Calu3 (cell line): ENCODE measurements at regions of chr6 and their contacts with region 1.

Region 1: GRCh38 chr6:7725849-7726415 is at the start of gene BMP6:
- DNase-seq: peak; percentile 82
- H3K4me3 Mint-ChIP-seq: peak within 1 kb of the TSS; percentile 76
- H3K27ac Mint-ChIP-seq: no peak within 1 kb of the TSS
- H3K4me1 Mint-ChIP-seq: no peaks in the 10 kb centered on the region
- H3K27me3 Mint-ChIP-seq: peaks cover 54% of the 10 kb centered on the region
- CTCF ChIP-seq: no peak
- total RNA-seq, gene BMP6: 0.17 and 0.27 TPM in 2 replicates

Region 2: GRCh38 chr6:7528565-7528964 is 197.4 kb before region 1 on chr6:
- CTCF ChIA-PET with region 1: no interaction called
- intact Hi-C with region 1: no loop called
- DNase-seq: no peak
- H3K4me3 Mint-ChIP-seq: no peak overlapping the region
- H3K27ac Mint-ChIP-seq: no peak overlapping the region
- H3K4me1 Mint-ChIP-seq: no peaks in the 10 kb centered on the region
- H3K27me3 Mint-ChIP-seq: no peaks in the 10 kb centered on the region
- CTCF ChIP-seq: no peak

Region 3: GRCh38 chr6:7803219-7803618 is 77.3 kb after region 1 on chr6:
- CTCF ChIA-PET with region 1: no interaction called
- intact Hi-C with region 1: no loop called
- DNase-seq: no peak
- H3K4me3 Mint-ChIP-seq: no peak overlapping the region
- H3K27ac Mint-ChIP-seq: no peak overlapping the region
- H3K4me1 Mint-ChIP-seq: no peaks in the 10 kb centered on the region
- H3K27me3 Mint-ChIP-seq: peaks cover 38% of the 10 kb centered on the region
- CTCF ChIP-seq: no peak

Region 4: DNA sequence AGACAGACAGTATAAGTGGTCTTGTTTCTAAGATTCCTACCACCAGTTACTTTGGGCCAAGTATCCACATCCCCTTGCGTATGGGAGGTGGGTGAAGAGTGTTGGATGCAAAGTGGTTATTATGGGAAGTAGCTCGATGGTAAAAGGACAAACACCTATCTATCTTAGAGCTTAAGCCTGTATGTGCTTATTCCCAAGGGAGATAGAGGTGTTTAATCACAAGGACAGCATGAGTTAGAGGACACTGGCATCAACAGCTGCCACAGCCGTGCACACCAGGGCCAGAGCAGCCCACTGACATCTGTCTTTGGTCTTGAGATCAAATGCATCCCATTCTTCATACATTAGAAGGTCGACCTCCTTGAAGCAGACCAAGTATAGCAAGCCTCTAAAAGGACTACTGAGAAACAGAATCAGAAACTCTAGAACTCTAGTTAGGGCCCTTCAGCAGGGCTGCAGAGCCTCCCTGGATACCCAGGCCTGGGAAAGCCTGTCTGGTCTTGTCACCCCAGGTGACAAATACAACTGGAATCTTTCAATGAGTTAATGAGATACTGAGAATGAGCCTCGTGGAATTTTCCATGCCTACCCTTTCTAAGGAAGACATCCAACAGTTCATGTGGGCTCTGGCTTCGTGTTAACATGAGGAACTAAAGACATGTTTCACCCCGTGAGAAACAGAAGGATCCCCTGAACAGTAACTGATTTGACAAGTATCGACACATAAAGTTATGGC is 156.0 kb after region 1 on chr6:
- CTCF ChIA-PET with region 1: no interaction called
- intact Hi-C with region 1: loop called (anchors 10 kb)
- DNase-seq: no peak
- H3K4me3 Mint-ChIP-seq: no peak overlapping the region
- H3K27ac Mint-ChIP-seq: no peak overlapping the region
- H3K4me1 Mint-ChIP-seq: peaks cover 22% of the 10 kb centered on the region
- H3K27me3 Mint-ChIP-seq: no peaks in the 10 kb centered on the region
- CTCF ChIP-seq: no peak

Region 5: GRCh38 chr6:7992002-7992815 is 266.3 kb after region 1 on chr6:
- CTCF ChIA-PET with region 1: no interaction called
- intact Hi-C with region 1: loop called (anchors 1 kb)
- DNase-seq: peak; percentile 9
- H3K4me3 Mint-ChIP-seq: no peak overlapping the region
- H3K27ac Mint-ChIP-seq: no peak overlapping the region
- H3K4me1 Mint-ChIP-seq: no peaks in the 10 kb centered on the region
- H3K27me3 Mint-ChIP-seq: no peaks in the 10 kb centered on the region
- CTCF ChIP-seq: peak; percentile 19

Region 6: GRCh38 chr6:8006208-8006607 is 280.3 kb after region 1 on chr6:
- CTCF ChIA-PET with region 1: interaction called, 11 read pairs
- intact Hi-C with region 1: loop called (anchors 2 kb)
- DNase-seq: no peak
- H3K4me3 Mint-ChIP-seq: no peak overlapping the region
- H3K27ac Mint-ChIP-seq: no peak overlapping the region
- H3K4me1 Mint-ChIP-seq: no peaks in the 10 kb centered on the region
- H3K27me3 Mint-ChIP-seq: no peaks in the 10 kb centered on the region
- CTCF ChIP-seq: peak; percentile 22

Region 7: DNA sequence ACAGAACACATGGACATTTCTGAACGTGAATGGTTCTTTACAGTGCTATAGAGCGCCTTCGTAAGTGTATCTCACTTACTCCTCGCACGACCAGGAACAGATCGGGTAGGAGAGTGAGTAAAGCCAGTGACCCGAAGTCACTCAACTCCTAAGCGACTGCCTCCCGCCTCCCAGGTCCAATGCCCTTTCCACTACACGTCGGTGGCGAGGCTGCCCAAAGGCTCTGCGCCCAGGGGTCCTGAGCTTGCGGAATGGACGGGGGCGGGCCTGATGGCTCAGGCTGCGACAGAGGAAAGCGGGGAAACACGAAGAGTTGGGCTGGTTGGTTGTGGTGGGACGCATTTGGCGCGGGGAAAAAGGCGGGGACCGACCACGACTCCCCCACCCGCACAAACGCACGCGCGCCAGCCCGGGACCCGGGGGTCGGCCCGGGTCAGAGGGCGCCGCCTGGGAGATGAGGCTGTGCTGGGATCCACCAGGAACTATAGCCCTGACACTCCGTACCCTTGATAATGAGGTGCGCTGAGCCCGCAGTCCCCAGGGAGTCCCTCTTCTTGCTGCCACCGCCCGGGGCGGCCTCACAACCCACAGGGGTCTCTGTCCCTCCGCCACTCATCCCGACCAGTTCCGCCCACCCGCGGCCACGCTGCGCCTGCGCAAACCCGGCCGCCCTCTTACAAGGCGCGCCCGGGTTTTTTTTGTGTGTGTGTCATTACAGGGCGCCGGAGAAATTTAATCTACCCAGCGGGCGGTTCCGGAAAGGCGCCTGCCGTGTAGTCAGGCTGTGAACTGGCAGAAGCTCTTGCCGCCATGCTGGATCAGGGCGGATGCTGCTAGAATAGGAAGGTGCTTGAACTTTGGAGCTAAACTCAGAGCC is 338.1 kb after region 1 on chr6 and contains the start of gene BLOC1S5:
- CTCF ChIA-PET with region 1: interaction called, 3 read pairs
- intact Hi-C with region 1: loop called (anchors 1 kb)
- DNase-seq: peak; percentile 90
- H3K4me3 Mint-ChIP-seq: peak within 1 kb of the TSS; percentile 89
- H3K27ac Mint-ChIP-seq: peak within 1 kb of the TSS; percentile 56
- H3K4me1 Mint-ChIP-seq: no peaks in the 10 kb centered on the region
- H3K27me3 Mint-ChIP-seq: no peaks in the 10 kb centered on the region
- CTCF ChIP-seq: no peak
- total RNA-seq, gene BLOC1S5: 8.0 and 10.5 TPM in 2 replicates

Region 8: DNA sequence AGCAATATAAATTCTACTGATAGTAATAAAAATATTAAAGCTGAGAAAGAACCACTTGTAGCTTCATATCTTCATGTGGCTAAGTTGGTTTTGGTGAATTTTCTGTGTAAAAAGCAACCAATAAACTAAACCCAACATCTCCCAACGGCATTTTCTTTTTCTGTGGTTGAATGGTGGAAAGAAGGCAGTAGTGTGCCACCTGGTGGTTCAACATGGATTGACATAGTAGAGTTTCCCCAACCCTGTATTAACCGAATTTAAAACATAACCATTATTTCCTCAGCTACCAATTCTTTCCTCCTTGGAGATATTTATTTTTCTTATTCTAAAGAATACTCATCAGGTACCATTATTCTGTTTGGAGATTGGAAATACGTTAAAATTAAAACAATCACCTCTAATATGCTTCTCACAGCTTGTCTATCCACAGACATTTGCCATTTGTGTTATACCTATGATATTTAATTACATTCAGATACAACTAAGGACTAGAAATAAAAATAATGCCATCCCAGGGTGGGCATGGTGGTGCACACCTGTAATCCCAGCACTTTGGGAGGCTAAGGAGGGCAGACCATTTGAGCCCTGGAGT is 493.5 kb after region 1 on chr6:
- CTCF ChIA-PET with region 1: no interaction called
- intact Hi-C with region 1: loop called (anchors 5 kb)
- DNase-seq: peak; percentile 46
- H3K4me3 Mint-ChIP-seq: no peak overlapping the region
- H3K27ac Mint-ChIP-seq: no peak overlapping the region
- H3K4me1 Mint-ChIP-seq: peaks cover 7% of the 10 kb centered on the region
- H3K27me3 Mint-ChIP-seq: no peaks in the 10 kb centered on the region
- CTCF ChIP-seq: peak; percentile 39